Right ventricle myocardium inferior (tissue), 1 donor: ENCODE measurements at regions of chr3 and their contacts with region 1.

Region 1: DNA sequence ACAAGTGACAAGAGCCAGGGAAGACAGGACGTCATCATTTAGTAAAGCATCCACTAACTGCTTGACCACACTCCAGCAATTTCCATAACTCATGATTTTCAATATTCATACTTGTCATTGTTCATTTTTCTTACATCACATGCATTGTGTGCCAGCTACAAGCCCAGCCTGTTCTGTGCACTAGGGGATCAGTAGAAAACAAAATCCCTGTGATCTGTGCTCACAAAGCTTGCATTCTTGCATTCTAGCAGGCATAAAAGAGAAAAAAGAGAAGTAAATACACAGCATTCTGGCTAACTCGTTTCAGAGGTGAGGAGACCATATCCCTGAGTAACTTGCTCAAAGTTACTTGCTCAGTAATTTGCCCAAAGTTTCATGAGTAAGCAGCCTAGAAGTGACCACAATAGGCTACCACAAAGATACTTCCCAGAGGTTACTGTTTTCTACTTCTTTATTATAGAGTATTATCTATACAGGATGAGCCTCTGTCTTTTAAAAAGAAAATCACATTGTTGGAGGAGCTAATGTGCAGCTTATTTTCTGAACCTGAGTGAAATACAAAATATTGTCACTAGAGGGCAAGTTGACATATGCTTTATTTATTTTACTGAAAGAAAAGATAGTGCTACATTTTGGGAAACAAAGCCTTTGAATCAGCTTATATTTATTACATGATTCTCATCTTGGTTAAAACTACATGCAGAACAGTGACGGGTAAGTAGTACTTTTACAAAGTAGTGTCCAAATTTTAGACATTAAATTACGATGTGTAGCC is 701.4 kb upstream of the LMCD1 start:
- DNase-seq: no peak
- ATAC-seq: no peak

Region 2: DNA sequence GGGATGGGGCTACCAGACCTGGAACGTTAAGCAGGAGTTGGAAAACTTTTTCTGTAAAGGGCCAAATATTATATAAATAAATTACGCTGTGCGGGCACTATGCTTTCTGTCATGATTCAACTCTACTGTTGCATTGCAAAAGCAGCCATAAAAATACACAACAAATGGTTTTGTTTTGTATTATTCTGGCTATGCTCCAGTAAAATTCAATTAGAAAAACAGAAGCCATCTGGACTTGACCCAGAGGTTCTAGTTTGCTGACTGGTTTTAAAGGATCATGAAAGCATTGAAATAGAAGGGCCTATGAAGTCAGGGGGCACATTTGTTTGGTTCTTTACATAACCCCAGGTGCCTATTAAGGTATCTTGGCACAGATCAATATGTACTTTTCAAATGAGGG is 54.1 kb after region 1 on chr3:
- intact Hi-C with region 1: no loop called
- DNase-seq: no peak
- ATAC-seq: no peak

Region 3: DNA sequence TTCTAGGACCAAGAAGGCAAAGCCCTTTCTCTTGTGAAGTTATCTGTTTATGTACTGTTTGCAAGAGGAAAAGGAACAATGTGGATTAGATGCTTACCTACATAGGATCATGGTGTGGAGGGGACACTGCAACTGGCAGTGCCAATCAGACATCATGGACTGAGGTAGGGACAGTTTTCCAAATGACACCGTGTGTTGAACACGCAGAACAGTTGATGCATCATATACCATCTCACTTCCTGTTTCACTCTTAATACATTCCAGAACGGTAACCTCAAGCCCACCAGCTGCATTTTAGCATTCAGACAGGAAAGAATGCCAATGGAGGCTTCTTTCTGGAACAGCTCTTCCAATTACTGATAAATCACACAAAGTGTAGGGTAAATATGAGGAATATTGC is 303.8 kb after region 1 on chr3:
- intact Hi-C with region 1: loop called (anchors 10 kb)
- DNase-seq: no peak
- ATAC-seq: no peak